B cell (primary cell): ENCODE measurements at regions of chr10 and their contacts with region 1.

Region 1: GRCh38 chr10:49187950-49188761 is at the start of gene TMEM273:
- DNase-seq: peak; percentile 82
- ATAC-seq: peak; percentile 74
- H3K4me3 ChIP-seq: peak within 1 kb of the TSS; percentile 19 to 61 (median 43)
- H3K4me3 Mint-ChIP-seq: peak within 1 kb of the TSS; percentile 89
- H3K27ac ChIP-seq: peak within 1 kb of the TSS; percentile 75 to 82
- H3K27ac Mint-ChIP-seq: peak within 1 kb of the TSS; percentile 96
- H3K4me1 ChIP-seq: peaks cover 71% of the 10 kb centered on the region in 2 donors
- H3K4me1 Mint-ChIP-seq: peaks cover 77% of the 10 kb centered on the region
- H3K27me3 ChIP-seq: no peaks in the 10 kb centered on the region
- H3K27me3 Mint-ChIP-seq: no peaks in the 10 kb centered on the region
- CTCF ChIP-seq: no peak
- total RNA-seq, gene TMEM273: 36.0 and 37.5 TPM in 2 replicates

Region 2: GRCh38 chr10:48306265-48306869 is 881.8 kb before region 1 on chr10 and contains the start of gene MAPK8:
- CTCF ChIA-PET with region 1: no interaction called
- POLR2A ChIA-PET with region 1: no interaction called
- intact Hi-C with region 1: loop called (anchors 10 kb)
- DNase-seq: peak; percentile 97
- ATAC-seq: peak; percentile 90
- H3K4me3 ChIP-seq: peak within 1 kb of the TSS; percentile 48 to 79 (median 71)
- H3K4me3 Mint-ChIP-seq: peak within 1 kb of the TSS; percentile 84
- H3K27ac ChIP-seq: peak within 1 kb of the TSS; percentile 54 to 89
- H3K27ac Mint-ChIP-seq: peak within 1 kb of the TSS; percentile 84
- H3K4me1 ChIP-seq: peaks cover 6 to 23% of the 10 kb centered on the region in 2 donors
- H3K4me1 Mint-ChIP-seq: peaks cover 27% of the 10 kb centered on the region
- H3K27me3 ChIP-seq: no peaks in the 10 kb centered on the region
- H3K27me3 Mint-ChIP-seq: no peaks in the 10 kb centered on the region
- CTCF ChIP-seq: no peak
- total RNA-seq, gene MAPK8: 40.0 and 51.5 TPM in 2 replicates

Region 3: DNA sequence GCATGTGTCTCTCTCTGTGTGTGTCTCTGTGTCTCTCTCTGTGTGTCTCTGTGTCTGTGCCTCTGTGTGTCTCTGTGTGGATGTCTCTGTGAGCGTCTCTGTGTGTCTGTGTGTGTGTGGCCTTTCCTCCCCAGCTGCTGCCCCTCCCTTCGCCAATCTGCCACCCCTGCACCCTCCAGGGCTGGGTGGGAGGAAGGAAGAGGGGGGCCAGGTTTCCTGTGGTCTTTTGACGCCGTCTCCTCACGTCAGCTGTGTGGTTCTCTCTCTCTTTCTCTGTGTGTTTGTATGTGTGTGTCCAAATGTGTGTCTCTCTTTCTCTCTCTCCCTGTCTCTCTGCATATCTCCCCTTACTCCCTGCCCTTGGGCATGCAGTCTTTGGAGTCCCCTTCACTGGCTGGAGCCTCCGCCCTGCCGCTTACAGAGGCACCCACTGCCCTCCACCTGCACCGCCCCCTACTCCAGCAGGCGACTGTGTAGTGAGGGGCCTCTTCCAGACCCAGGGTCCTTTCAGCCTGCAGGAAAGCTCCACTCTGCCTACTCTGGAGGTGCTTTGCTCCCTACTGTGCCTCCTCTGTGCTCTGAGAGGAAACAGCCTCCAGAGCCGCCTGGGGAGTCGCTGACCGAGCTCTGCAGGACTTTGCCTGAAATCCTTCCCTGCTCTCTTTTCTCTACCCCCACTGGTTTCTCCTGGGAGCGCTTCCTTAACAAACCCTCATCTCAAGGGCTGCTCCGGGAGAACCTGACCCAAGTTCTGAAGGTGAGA is 66.6 kb after region 1 on chr10:
- CTCF ChIA-PET with region 1: interaction called, 3 read pairs
- POLR2A ChIA-PET with region 1: no interaction called
- intact Hi-C with region 1: loop called (anchors 5 kb)
- DNase-seq: peak; percentile 46
- ATAC-seq: peak; percentile 68
- H3K4me3 ChIP-seq: peak overlapping the region in 2 of 5 experiments; percentile 21 to 29
- H3K4me3 Mint-ChIP-seq: no peak overlapping the region
- H3K27ac ChIP-seq: peak overlapping the region in 1 of 2 donors; percentile 27
- H3K27ac Mint-ChIP-seq: no peak overlapping the region
- H3K4me1 ChIP-seq: peaks cover 37 to 46% of the 10 kb centered on the region in 2 donors
- H3K4me1 Mint-ChIP-seq: peaks cover 12% of the 10 kb centered on the region
- H3K27me3 ChIP-seq: no peaks in the 10 kb centered on the region
- H3K27me3 Mint-ChIP-seq: no peaks in the 10 kb centered on the region
- CTCF ChIP-seq: no peak